CD8-positive, alpha-beta T cell (primary cell): ENCODE measurements at regions of chr5 and their contacts with region 1.

Region 1: GRCh38 chr5:147805030-147805454 is 22.5 kb upstream of the JAKMIP2 start:
- DNase-seq: peak in 7 of 9 experiments; percentile 11 to 82 (median 53)
- ATAC-seq: peak; percentile 91
- H3K4me3 ChIP-seq: no peak overlapping the region
- H3K4me3 Mint-ChIP-seq: no peak overlapping the region
- H3K27ac ChIP-seq: peak overlapping the region in 1 of 2 experiments; percentile 46
- H3K27ac Mint-ChIP-seq: peak overlapping the region; percentile 33
- H3K4me1 ChIP-seq: peaks cover 5% of the 10 kb centered on the region
- H3K4me1 Mint-ChIP-seq: peaks cover 22% of the 10 kb centered on the region
- H3K27me3 ChIP-seq: no peaks in the 10 kb centered on the region
- H3K27me3 Mint-ChIP-seq: peaks cover 3% of the 10 kb centered on the region
- CTCF ChIP-seq: no peak

Region 2: DNA sequence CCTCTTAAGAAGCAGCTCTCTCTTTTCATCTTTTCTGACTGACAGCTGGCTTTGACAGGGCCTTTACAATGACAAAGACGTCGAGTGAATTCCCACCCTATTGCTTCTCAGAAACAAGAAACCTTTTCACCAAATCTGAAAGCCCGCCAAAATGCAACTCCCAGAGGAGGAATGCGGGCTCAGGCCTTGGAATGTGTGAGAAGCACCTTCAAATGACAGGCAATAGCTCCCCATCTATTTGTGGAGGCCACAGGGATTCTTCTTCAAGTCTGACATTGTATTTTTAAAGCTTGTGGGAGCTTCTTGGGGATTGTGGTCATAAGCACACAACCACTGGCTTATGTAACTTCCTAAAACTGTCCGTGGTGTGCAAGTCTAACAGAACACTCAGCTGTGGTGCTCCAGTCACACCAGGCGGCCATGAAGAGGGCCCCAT is 367.9 kb before region 1 on chr5:
- CTCF ChIA-PET with region 1: no interaction called
- POLR2A ChIA-PET with region 1: no interaction called
- intact Hi-C with region 1: no loop called
- DNase-seq: no peak
- ATAC-seq: no peak
- H3K4me3 ChIP-seq: no peak overlapping the region
- H3K4me3 Mint-ChIP-seq: no peak overlapping the region
- H3K27ac ChIP-seq: no peak overlapping the region
- H3K27ac Mint-ChIP-seq: no peak overlapping the region
- H3K4me1 ChIP-seq: no peaks in the 10 kb centered on the region
- H3K4me1 Mint-ChIP-seq: no peaks in the 10 kb centered on the region
- H3K27me3 ChIP-seq: no peaks in the 10 kb centered on the region
- H3K27me3 Mint-ChIP-seq: peaks cover 10% of the 10 kb centered on the region
- CTCF ChIP-seq: no peak

Region 3: GRCh38 chr5:147782110-147783028 is 22.7 kb before region 1 on chr5 and contains the start of gene JAKMIP2:
- CTCF ChIA-PET with region 1: interaction called, 4 read pairs
- POLR2A ChIA-PET with region 1: interaction called, 6 read pairs
- intact Hi-C with region 1: loop called in 1 of 2 experiments (anchors 2 kb)
- DNase-seq: peak; percentile 70 to 92 (median 85)
- ATAC-seq: peak; percentile 96
- H3K4me3 ChIP-seq: peak within 1 kb of the TSS; percentile 51 to 60
- H3K4me3 Mint-ChIP-seq: peak within 1 kb of the TSS; percentile 84
- H3K27ac ChIP-seq: peak within 1 kb of the TSS; percentile 46 to 77
- H3K27ac Mint-ChIP-seq: peak within 1 kb of the TSS; percentile 92
- H3K4me1 ChIP-seq: peaks cover 11% of the 10 kb centered on the region
- H3K4me1 Mint-ChIP-seq: peaks cover 31% of the 10 kb centered on the region
- H3K27me3 ChIP-seq: no peaks in the 10 kb centered on the region
- H3K27me3 Mint-ChIP-seq: no peaks in the 10 kb centered on the region
- CTCF ChIP-seq: no peak
- total RNA-seq, gene JAKMIP2: 1.1 to 2.0 TPM

Region 4: GRCh38 chr5:147935032-147935431 is 130.0 kb after region 1 on chr5:
- CTCF ChIA-PET with region 1: no interaction called
- POLR2A ChIA-PET with region 1: no interaction called
- intact Hi-C with region 1: no loop called
- DNase-seq: no peak
- ATAC-seq: no peak
- H3K4me3 ChIP-seq: no peak overlapping the region
- H3K4me3 Mint-ChIP-seq: no peak overlapping the region
- H3K27ac ChIP-seq: no peak overlapping the region
- H3K27ac Mint-ChIP-seq: no peak overlapping the region
- H3K4me1 ChIP-seq: no peaks in the 10 kb centered on the region
- H3K4me1 Mint-ChIP-seq: no peaks in the 10 kb centered on the region
- H3K27me3 ChIP-seq: no peaks in the 10 kb centered on the region
- H3K27me3 Mint-ChIP-seq: peaks cover 3% of the 10 kb centered on the region
- CTCF ChIP-seq: no peak

Region 5: GRCh38 chr5:148237785-148238184 is 432.7 kb after region 1 on chr5:
- CTCF ChIA-PET with region 1: no interaction called
- POLR2A ChIA-PET with region 1: no interaction called
- intact Hi-C with region 1: no loop called
- DNase-seq: no peak
- ATAC-seq: no peak
- H3K4me3 ChIP-seq: no peak overlapping the region
- H3K4me3 Mint-ChIP-seq: no peak overlapping the region
- H3K27ac ChIP-seq: no peak overlapping the region
- H3K27ac Mint-ChIP-seq: no peak overlapping the region
- H3K4me1 ChIP-seq: no peaks in the 10 kb centered on the region
- H3K4me1 Mint-ChIP-seq: no peaks in the 10 kb centered on the region
- H3K27me3 ChIP-seq: no peaks in the 10 kb centered on the region
- H3K27me3 Mint-ChIP-seq: no peaks in the 10 kb centered on the region
- CTCF ChIP-seq: no peak